GM18951 (cell line): ENCODE measurements at regions of chr2 and their contacts with region 1.

Region 1: DNA sequence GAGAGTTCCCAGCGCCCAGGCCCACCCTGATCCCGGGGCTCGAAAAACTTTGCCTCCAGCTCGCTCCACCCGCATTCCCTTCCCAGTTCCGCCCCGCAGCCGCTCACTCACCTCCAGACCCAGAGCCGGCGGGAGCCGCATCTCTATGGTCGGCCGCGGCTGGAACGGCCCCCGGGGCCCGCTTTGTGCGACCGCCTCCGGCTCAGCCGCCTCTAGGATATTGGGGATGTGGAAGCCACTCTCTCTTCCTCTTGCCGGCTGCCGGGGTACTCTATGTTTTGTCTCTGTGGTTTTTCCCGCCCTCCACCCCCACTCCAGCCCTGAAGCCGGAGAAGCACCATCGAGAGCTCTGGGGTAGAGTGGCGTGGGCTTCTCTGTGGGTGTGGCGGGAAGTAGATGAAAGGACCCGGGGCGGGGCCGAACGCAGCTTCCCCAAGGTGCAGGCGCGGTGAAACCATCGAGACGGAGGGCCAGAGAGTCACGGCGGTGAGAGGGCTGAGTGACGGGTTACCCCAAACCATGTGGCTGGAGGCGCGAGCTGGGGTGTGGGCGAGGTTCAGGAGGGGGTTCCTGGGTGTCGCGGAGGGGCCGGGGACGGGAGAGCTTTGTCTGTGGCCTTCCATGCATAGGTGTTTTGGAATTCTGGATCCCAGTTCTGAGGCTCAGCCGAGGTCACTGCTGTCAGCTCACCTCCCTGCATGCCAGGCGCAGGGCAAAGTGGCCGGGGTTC is at the starts of genes BCS1L and ZNF142:
- POLR2A ChIP-seq: peak; percentile 80

Region 2: GRCh38 chr2:218501665-218502064 is 157.8 kb before region 1 on chr2:
- in situ Hi-C with region 1: no loop called
- POLR2A ChIP-seq: no peak

Region 3: DNA sequence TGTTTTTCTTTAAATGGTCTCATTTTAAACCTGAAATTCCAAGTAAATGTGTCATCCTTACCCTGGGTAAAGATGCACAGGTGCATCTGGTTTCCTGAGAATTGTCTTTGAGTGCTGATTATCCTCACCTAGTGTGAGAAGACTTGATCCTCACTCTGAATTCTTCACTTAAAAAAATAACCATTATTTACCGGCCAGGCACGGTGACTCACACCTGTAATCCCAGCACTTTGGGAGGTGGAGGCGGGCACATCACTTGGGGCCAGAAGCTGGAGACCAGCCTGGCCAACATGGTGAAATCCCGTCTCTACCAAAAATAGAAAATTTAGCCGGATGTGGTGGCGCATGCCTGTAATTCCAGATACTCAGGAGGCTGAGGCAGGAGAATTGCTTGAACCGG is 190.3 kb after region 1 on chr2:
- in situ Hi-C with region 1: loop called (anchors 10 kb)
- POLR2A ChIP-seq: no peak